Right cardiac atrium (tissue), 5 donors: ENCODE measurements at regions of chr11 and their contacts with region 1.

Region 1: GRCh38 chr11:62860835-62861563 is 19.7 kb upstream of the SLC3A2 start:
- DNase-seq: no peak
- ATAC-seq: no peak
- H3K4me3 ChIP-seq: no peak overlapping the region
- H3K27ac ChIP-seq: no peak overlapping the region
- H3K4me1 ChIP-seq: no peaks in the 10 kb centered on the region
- H3K27me3 ChIP-seq: no peaks in the 10 kb centered on the region

Region 2: GRCh38 chr11:62394825-62395538 is 466.0 kb before region 1 on chr11:
- intact Hi-C with region 1: loop called in 1 of 4 experiments (anchors 10 kb)
- DNase-seq: peak; percentile 87 to 95 (median 94)
- ATAC-seq: peak; percentile 76 to 79
- H3K4me3 ChIP-seq: peak overlapping the region; percentile 29
- H3K27ac ChIP-seq: peak overlapping the region; percentile 62
- H3K4me1 ChIP-seq: peaks cover 16% of the 10 kb centered on the region
- H3K27me3 ChIP-seq: no peaks in the 10 kb centered on the region